GM12878 (cell line): ENCODE measurements at regions of chr2 and their contacts with region 1.

Region 1: GRCh38 chr2:68203587-68203986 is 45.9 kb downstream of the PNO1 start:
- DNase-seq: peak; percentile 84
- ATAC-seq: peak; percentile 96
- H3K4me3 ChIP-seq: peak overlapping the region; percentile 51; the same call in 1 of the 2 replicates
- H3K27ac ChIP-seq: peak overlapping the region; percentile 72
- H3K4me1 ChIP-seq: peaks cover 27% of the 10 kb centered on the region
- H3K27me3 ChIP-seq: no peaks in the 10 kb centered on the region
- CTCF ChIP-seq: no peak
- EP300 ChIP-seq: peak; percentile 73 to 74; a peak in 3 of 4 replicates
- POLR2A ChIP-seq: no peak
- RAD21 ChIP-seq: no peak

Region 2: GRCh38 chr2:68216454-68217310 is 13.1 kb after region 1 on chr2:
- CTCF ChIA-PET with region 1: interaction called, 7 read pairs
- POLR2A ChIA-PET with region 1: interaction called, 3 read pairs
- RAD21 ChIA-PET with region 1: interaction called, 4 read pairs
- SMC1A ChIA-PET with region 1: interaction called, 10 read pairs
- in situ Hi-C with region 1: no loop called
- intact Hi-C with region 1: no loop called
- DNase-seq: no peak
- ATAC-seq: peak; percentile 16; the same call in 1 of the 3 replicates
- H3K4me3 ChIP-seq: no peak overlapping the region
- H3K27ac ChIP-seq: peak overlapping the region; percentile 10; the same call in 1 of the 2 replicates
- H3K4me1 ChIP-seq: peaks cover 50% of the 10 kb centered on the region
- H3K27me3 ChIP-seq: no peaks in the 10 kb centered on the region
- CTCF ChIP-seq: no peak
- EP300 ChIP-seq: no peak
- POLR2A ChIP-seq: no peak
- RAD21 ChIP-seq: no peak

Region 3: DNA sequence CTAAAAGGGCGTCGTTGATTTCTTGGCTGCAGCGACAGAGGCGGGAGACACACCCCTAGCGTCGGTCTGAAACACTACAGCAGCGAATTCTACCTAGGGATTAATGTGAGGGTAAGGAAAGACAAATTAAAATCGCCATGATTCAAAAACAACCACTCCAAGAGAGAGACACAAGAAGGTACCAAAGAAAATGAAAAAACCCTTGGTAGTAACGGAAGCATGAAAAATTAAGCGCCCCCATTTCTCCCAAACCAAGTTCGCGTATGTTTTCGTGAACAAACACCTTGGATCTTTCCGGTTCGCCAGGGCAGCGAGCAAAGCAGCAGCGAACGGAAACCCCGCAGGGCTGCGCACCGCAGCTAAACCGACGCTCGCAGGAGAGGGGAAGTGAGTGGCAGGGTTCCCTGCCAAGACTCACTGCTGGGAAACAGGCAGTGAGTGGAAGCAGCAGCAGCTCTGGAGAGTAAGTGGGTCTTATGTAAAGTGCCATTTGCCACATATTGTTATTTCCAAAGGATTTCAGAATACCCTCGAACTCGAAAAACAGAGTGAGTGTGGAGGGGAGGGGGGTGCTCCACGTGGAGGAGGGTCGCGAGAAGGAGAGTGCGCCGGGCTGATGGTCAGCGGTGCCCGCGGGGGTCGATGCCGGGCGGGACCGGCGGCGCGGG is 47.7 kb after region 1 on chr2:
- CTCF ChIA-PET with region 1: interaction called, 6 read pairs
- POLR2A ChIA-PET with region 1: interaction called, 3 read pairs
- RAD21 ChIA-PET with region 1: interaction called, 3 read pairs
- SMC1A ChIA-PET with region 1: interaction called, 5 read pairs
- in situ Hi-C with region 1: no loop called
- intact Hi-C with region 1: loop called (anchors 2 kb)
- DNase-seq: peak; percentile 64
- ATAC-seq: peak; percentile 70
- H3K4me3 ChIP-seq: peak overlapping the region; percentile 85
- H3K27ac ChIP-seq: peak overlapping the region; percentile 91
- H3K4me1 ChIP-seq: peaks cover 18% of the 10 kb centered on the region
- H3K27me3 ChIP-seq: no peaks in the 10 kb centered on the region
- CTCF ChIP-seq: peak; percentile 70 to 79 (median 76)
- EP300 ChIP-seq: no peak
- POLR2A ChIP-seq: no peak; the same call in 1 of the 2 replicates
- RAD21 ChIP-seq: peak; percentile 71